Activated CD4-positive, alpha-beta T cell treated with anti-CD3 and anti-CD28 coated beads, Interleukin-2, amount 10 ng/mL, durations not matched to agents 7 days and 5 days (primary cell): ENCODE measurements at regions of chr2 and their contacts with region 1.

Region 1: GRCh38 chr2:46045888-46046287 is 251.3 kb upstream of the EPAS1 start:
- DNase-seq: no peak
- H3K4me3 Mint-ChIP-seq: no peak overlapping the region
- H3K27ac Mint-ChIP-seq: no peak overlapping the region
- H3K4me1 Mint-ChIP-seq: peaks cover 9% of the 10 kb centered on the region
- H3K27me3 Mint-ChIP-seq: no peaks in the 10 kb centered on the region

Region 2: GRCh38 chr2:46062637-46063412 is 16.9 kb after region 1 on chr2:
- CTCF ChIA-PET with region 1: interaction called, 11 read pairs
- POLR2A ChIA-PET with region 1: no interaction called
- DNase-seq: peak; percentile 81
- H3K4me3 Mint-ChIP-seq: no peak overlapping the region
- H3K27ac Mint-ChIP-seq: no peak overlapping the region
- H3K4me1 Mint-ChIP-seq: peaks cover 16% of the 10 kb centered on the region
- H3K27me3 Mint-ChIP-seq: no peaks in the 10 kb centered on the region